A673 (cell line): ENCODE measurements at regions of chr5 and their contacts with region 1.

Region 1: GRCh38 chr5:1502046-1502736 is 21.6 kb downstream of the LPCAT1 start:
- DNase-seq: peak; percentile 60
- H3K4me3 ChIP-seq: no peak overlapping the region
- H3K27ac ChIP-seq: no peak overlapping the region
- H3K4me1 ChIP-seq: no peaks in the 10 kb centered on the region
- H3K27me3 ChIP-seq: no peaks in the 10 kb centered on the region
- CTCF ChIP-seq: no peak

Region 2: GRCh38 chr5:1347571-1347970 is 154.6 kb before region 1 on chr5:
- CTCF ChIA-PET with region 1: interaction called, 11 read pairs
- POLR2A ChIA-PET with region 1: no interaction called
- intact Hi-C with region 1: no loop called
- DNase-seq: no peak
- H3K4me3 ChIP-seq: no peak overlapping the region
- H3K27ac ChIP-seq: no peak overlapping the region
- H3K4me1 ChIP-seq: peaks cover 6% of the 10 kb centered on the region
- H3K27me3 ChIP-seq: peaks cover 24% of the 10 kb centered on the region
- CTCF ChIP-seq: no peak